Activated CD8-positive, alpha-beta T cell treated with anti-CD3 and anti-CD28 coated beads, Interleukin-2, amount 10 ng/mL, durations not matched to agents 7 days and 5 days (primary cell): ENCODE measurements at regions of chr11 and their contacts with region 1.

Region 1: DNA sequence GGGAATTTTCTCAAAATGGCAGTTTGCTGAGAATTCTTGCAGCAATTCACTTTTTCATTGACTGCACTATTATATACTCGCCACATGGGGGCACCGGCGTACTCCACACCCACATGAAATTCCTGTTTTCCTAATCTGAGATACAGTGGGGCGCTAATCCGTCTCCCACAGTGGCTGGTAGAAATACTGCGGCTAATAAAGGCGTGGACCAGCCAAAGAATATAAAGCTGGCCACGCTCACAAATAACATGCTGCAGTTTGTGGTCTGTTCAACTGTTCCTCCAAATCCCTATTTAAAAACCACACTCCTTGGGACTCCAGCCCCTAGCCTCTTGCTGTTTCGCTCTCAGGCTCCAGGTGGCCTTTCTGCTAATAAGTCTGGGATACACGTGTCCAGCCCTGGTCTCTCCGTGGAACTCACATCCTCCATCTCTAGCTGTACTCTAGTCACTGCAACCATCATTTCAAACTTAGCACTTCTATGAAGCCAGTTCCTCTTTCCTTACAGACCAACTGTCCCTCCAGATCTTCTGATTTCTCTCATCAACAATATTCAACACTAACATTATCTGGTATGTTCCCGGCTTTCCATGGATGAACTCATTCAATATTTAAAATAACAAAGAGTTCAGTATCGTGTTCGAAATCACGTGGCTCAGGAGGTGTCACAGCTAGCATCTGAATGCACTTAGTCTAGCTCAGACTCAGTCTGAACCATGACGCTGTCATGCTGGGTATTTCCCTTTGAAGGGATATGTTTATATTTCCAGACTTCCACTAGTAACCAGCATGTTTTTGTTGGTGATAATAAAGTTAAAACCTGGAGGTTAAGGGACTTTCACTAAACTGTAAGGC is 22.0 kb downstream of the TBRG1 start:
- DNase-seq: peak; percentile 38
- ATAC-seq: peak; percentile 67
- H3K4me3 Mint-ChIP-seq: no peak overlapping the region
- H3K27ac Mint-ChIP-seq: no peak overlapping the region
- H3K4me1 Mint-ChIP-seq: no peaks in the 10 kb centered on the region
- H3K27me3 Mint-ChIP-seq: no peaks in the 10 kb centered on the region

Region 2: DNA sequence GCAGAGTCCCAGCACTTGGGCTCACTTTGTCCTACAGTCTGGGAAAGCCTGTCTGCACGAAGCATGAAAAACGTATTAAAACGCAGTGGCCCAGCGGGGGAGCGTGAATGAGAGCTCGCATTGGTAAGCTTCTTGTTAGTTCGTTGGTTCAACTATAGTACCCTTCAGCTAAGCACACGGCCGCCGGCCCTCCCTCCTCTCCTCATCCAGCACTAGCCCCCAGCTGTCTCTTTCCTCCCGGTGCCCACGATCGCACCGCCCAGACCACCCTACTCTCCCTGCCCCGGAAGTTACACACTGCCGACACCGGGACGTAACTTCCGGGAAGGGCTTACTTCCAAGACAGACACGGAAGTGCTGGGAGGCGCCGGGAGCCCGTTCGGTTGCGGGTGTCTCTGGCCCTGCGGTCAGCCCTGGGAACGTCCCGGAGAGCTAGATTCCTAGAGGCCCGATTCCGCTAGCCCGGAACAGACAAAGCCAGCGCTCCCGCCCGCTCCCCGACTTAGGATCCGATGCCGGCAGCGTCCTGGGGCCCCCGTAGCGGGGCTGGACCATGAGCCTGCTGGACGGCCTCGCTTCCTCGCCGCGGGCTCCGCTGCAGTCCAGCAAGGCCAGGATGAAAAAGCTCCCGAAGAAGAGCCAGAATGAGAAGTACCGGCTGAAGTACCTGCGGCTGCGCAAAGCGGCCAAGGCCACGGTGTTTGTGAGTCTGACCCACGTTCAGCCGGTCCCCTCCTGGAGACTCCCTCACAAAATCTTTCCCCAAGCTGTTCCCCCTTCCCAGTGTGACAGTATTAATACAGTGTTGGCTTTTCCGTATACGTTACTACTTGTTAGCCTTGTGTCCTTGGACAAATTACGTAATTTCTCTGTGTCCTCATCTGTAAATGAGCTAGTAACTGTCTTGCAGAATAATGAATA is 21.9 kb before region 1 on chr11 and contains the start of gene TBRG1:
- CTCF ChIA-PET with region 1: interaction called, 16 read pairs
- POLR2A ChIA-PET with region 1: interaction called, 8 read pairs
- DNase-seq: peak; percentile 88
- ATAC-seq: peak; percentile 98
- H3K4me3 Mint-ChIP-seq: peak within 1 kb of the TSS; percentile 97
- H3K27ac Mint-ChIP-seq: peak within 1 kb of the TSS; percentile 95
- H3K4me1 Mint-ChIP-seq: peaks cover 22% of the 10 kb centered on the region
- H3K27me3 Mint-ChIP-seq: peaks cover 10% of the 10 kb centered on the region
- total RNA-seq, gene TBRG1: 36.2 to 41.3 TPM

Region 3: DNA sequence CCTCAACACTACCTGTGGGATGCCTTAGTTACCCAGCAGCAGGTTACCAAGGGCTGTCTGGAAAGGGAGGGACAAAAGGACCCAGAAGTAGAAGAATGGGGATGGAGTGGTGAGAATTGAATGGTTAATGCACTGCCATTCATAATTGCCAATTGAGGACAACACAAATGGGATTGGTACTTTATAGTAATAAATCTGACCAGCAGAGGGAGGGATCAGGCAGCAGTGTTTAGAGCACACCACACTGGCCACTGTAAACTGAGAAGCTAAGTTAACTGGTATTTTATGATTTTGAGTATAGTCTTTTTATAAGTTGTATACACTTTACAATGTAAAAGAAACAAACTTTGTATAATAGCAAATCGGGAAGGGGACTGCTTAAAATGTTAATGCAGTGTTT is 11.3 kb before region 1 on chr11:
- CTCF ChIA-PET with region 1: interaction called, 13 read pairs
- POLR2A ChIA-PET with region 1: no interaction called
- DNase-seq: no peak
- ATAC-seq: peak; percentile 53
- H3K4me3 Mint-ChIP-seq: no peak overlapping the region
- H3K27ac Mint-ChIP-seq: no peak overlapping the region
- H3K4me1 Mint-ChIP-seq: peaks cover 2% of the 10 kb centered on the region
- H3K27me3 Mint-ChIP-seq: no peaks in the 10 kb centered on the region

Region 4: DNA sequence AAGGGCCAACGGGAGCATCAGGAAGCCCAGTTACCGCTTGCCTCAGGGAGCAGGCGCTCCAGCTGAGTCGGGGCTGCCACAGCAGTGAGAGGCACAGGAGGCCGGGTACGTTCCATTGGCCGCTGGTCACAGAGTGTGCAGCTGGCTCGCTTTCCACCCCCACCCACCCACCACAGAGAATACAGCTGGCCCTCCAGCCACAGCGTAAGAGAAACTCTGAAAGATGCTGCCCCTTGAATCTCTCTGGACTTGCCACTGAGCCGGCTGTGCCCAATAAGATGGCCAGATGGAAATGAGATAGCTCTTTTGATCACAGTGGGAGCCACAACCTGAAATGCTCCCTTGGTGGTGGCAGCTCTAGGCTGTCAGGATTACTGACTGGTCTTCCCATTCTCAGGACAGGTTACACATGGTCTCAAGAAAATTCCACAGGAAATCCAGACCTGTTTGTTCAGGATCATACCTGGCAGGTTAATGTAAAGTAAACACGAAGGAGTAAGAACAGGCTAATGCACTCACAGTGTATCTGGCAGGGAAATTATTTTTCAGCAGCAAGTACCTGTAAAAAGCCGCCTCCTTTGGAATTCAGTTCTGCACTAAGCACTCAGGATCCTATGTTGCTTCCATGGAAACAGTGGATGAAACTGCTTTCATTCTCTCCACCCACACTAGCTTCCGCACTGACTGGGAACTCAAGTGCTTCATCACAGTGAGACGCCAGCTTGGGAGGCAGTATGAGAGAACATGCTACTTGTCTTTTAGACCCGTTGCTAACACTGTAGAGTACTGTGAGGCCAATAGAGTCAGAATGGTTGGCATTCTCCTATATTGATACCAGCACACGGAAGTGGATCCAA is 12.3 kb after region 1 on chr11:
- CTCF ChIA-PET with region 1: interaction called, 12 read pairs
- POLR2A ChIA-PET with region 1: no interaction called
- DNase-seq: no peak
- ATAC-seq: no peak
- H3K4me3 Mint-ChIP-seq: no peak overlapping the region
- H3K27ac Mint-ChIP-seq: no peak overlapping the region
- H3K4me1 Mint-ChIP-seq: no peaks in the 10 kb centered on the region
- H3K27me3 Mint-ChIP-seq: no peaks in the 10 kb centered on the region

Region 5: DNA sequence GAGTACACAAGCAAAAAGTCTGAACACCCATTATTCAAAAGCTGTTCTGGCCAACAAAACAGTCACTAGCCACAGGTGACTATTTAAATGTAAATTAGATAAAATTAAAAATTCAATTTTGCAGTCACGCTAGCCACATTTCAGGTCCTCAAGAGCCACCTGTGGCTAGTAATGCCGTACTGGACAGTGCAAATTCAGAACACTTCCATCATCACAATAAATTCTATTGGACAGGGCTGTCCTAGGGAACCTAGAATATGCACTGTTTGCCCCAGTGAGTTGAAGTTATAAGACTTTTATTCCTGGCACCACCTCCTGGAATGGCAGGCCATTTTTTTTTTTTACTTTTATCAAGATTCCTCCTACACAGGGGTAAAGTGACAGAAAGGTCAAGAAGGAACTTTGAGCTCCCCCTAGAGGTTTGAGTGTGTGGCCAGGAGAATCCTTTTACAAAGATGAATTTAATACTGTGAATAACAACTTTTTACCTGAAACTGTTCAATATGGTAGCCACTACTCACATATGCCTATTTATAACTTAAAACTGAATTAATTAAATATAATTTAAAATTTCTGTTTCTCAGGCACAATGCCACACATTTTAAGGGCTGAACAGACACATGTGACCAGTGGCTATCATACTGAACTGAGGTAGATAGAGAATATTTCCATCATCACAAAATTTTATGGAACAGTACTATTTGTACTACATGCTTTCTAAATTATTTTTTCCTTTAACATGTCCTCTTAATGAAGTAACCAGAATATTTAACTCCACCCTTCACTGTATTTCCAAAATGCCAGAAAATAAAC is 149.0 kb after region 1 on chr11:
- CTCF ChIA-PET with region 1: interaction called, 12 read pairs
- POLR2A ChIA-PET with region 1: interaction called, 4 read pairs
- DNase-seq: peak; percentile 44
- ATAC-seq: peak; percentile 64
- H3K4me3 Mint-ChIP-seq: no peak overlapping the region
- H3K27ac Mint-ChIP-seq: no peak overlapping the region
- H3K4me1 Mint-ChIP-seq: peaks cover 34% of the 10 kb centered on the region
- H3K27me3 Mint-ChIP-seq: no peaks in the 10 kb centered on the region

Region 6: GRCh38 chr11:124800226-124800929 is 155.7 kb after region 1 on chr11 and contains the start of gene MSANTD2:
- CTCF ChIA-PET with region 1: interaction called, 12 read pairs
- POLR2A ChIA-PET with region 1: interaction called, 4 read pairs
- DNase-seq: peak; percentile 83
- ATAC-seq: peak; percentile 90
- H3K4me3 Mint-ChIP-seq: peak within 1 kb of the TSS; percentile 85
- H3K27ac Mint-ChIP-seq: peak within 1 kb of the TSS; percentile 93
- H3K4me1 Mint-ChIP-seq: peaks cover 26% of the 10 kb centered on the region
- H3K27me3 Mint-ChIP-seq: peaks cover 12% of the 10 kb centered on the region
- total RNA-seq, gene MSANTD2: 9.1 to 10.2 TPM